CD4-positive, alpha-beta memory T cell (primary cell): ENCODE measurements at regions of chr7 and their contacts with region 1.

Region 1: GRCh38 chr7:129502376-129502776 is at the start of gene SMKR1:
- DNase-seq: peak; percentile 93 to 96 (median 96)
- H3K4me3 ChIP-seq: peak within 1 kb of the TSS; percentile 18 to 55
- H3K4me3 Mint-ChIP-seq: peak within 1 kb of the TSS; percentile 85 to 91 (median 88)
- H3K27ac ChIP-seq: peak within 1 kb of the TSS; percentile 66
- H3K27ac Mint-ChIP-seq: peak within 1 kb of the TSS; percentile 87 to 97 (median 93)
- H3K4me1 ChIP-seq: peaks cover 6% of the 10 kb centered on the region
- H3K4me1 Mint-ChIP-seq: peaks cover 6 to 18% (median 12%) of the 10 kb centered on the region in 4 donors
- H3K27me3 ChIP-seq: no peaks in the 10 kb centered on the region
- H3K27me3 Mint-ChIP-seq: no peaks in the 10 kb centered on the region
- total RNA-seq, gene SMKR1: 1.2 to 1.5 TPM

Region 2: GRCh38 chr7:129433847-129434674 is 68.3 kb before region 1 on chr7 and contains the start of gene STRIP2:
- CTCF ChIA-PET with region 1: interaction called, 5 read pairs
- POLR2A ChIA-PET with region 1: interaction called, 3 read pairs
- intact Hi-C with region 1: loop called (anchors 1 kb)
- DNase-seq: peak; percentile 84 to 90 (median 87)
- H3K4me3 ChIP-seq: peak within 1 kb of the TSS; percentile 85 to 92
- H3K4me3 Mint-ChIP-seq: peak within 1 kb of the TSS; percentile 92 to 98 (median 94)
- H3K27ac ChIP-seq: no peak within 1 kb of the TSS
- H3K27ac Mint-ChIP-seq: peak within 1 kb of the TSS; percentile 37 to 85 (median 71)
- H3K4me1 ChIP-seq: peaks cover 17% of the 10 kb centered on the region
- H3K4me1 Mint-ChIP-seq: peaks cover 3 to 21% (median 15%) of the 10 kb centered on the region in 4 donors
- H3K27me3 ChIP-seq: no peaks in the 10 kb centered on the region
- H3K27me3 Mint-ChIP-seq: peaks cover 5 to 25% of the 10 kb centered on the region in 2 donors
- total RNA-seq, gene STRIP2: 0.20 to 0.22 TPM